Sigmoid colon (tissue), 7 donors: ENCODE measurements at regions of chr11 and their contacts with region 1.

Region 1: DNA sequence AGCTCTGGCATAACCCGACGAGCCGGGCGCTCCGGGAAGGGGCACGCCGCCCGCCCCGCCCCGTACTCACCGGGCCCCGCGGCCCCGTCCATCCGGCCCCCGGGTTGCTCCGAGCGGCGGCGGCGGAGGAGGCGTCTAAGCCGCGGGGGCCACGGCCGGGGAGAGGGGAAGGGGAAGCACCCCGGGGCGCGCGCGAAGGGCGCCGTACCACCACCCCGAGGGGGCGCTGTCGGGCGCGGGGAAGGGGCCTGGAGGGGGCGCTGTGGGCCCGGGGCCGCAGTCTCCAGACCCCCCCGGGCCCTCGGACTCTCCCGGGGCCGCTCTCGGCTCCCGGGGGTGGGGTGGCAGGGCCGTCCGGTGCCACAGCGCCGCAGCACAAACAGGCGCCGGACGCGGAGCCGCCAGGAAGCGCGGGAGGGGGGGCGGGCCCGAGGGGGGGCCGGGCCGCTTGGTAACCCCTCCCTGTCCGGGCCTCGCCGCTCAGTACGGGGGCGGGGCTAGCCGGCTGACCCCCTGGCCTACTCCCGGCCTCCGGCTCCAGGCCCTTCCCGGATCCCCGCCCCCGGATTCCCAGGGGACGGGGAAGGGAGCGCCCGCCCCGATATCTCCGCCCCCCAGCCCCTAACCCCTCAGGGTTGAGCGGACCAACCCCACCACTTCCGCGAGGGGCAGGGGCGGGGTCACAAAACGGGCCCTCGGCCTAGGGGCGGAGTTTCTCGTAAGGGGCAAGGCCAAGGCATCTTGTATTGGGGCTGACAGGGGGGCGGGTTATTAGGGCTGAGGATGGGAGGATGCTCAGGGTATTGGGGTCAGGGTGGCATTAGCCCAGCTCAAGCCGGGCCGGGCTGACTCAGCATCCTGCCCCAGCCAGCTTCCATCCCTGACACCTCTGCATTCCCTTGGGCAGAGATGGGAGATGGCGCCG is at the starts of genes EML3 and ROM1:
- DNase-seq: peak; percentile 96
- H3K4me3 ChIP-seq: peak within 1 kb of the TSS; percentile 53 to 82 (median 62)
- H3K27ac ChIP-seq: peak within 1 kb of the TSS; percentile 88 to 100 (median 96)
- H3K4me1 ChIP-seq: peaks cover 0 to 30% (median 24%) of the 10 kb centered on the region in 4 donors
- H3K27me3 ChIP-seq: no peaks in the 10 kb centered on the region
- CTCF ChIP-seq: peak; percentile 39 to 99 (median 56)
- EP300 ChIP-seq: no peak
- POLR2A ChIP-seq: no peak
- total RNA-seq, gene EML3: 19.6 to 39.5 (median 30.2) TPM
- total RNA-seq, gene ROM1: 5.3 to 13.8 (median 10.1) TPM

Region 2: GRCh38 chr11:62497132-62497915 is 115.3 kb before region 1 on chr11:
- intact Hi-C with region 1: no loop called
- DNase-seq: no peak
- H3K4me3 ChIP-seq: no peak overlapping the region
- H3K27ac ChIP-seq: no peak overlapping the region
- H3K4me1 ChIP-seq: peaks cover 0 to 33% (median 31%) of the 10 kb centered on the region in 4 donors
- H3K27me3 ChIP-seq: no peaks in the 10 kb centered on the region
- CTCF ChIP-seq: peak in 1 of 4 experiments; percentile 24
- EP300 ChIP-seq: no peak
- POLR2A ChIP-seq: no peak

Region 3: DNA sequence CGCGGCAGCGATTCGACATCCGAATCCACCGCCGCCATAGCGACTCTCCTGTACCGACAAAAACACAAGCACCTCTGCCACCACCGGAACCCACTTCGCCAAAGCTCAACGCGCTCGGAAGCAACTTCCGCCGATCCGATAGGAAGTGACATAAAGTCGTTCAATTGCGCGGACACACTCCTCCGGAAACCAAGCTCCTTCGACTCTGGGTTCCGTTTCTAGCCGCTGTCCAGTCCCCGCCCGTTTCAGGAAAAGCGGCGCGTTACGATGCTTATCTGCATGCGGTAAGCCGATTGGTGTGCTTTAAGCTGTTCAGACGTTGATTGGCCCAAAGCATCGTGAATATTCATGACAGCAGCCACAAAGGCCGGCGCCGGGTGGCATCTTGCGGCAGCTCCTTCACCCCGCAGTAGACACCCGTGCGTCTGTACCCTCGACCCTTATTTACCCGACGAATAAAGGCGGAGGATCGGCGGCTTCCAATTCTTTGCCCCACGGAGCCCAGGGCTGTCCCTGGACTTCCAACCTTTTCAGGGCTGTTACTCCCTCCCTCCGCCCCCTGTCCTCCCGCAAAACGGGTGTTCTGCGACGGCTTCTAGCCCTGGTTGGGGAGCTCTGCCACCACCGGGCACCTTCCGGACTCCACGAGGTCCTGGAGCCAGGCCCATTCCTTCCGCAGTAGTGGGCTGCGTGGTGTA is 21.0 kb before region 1 on chr11 and contains the start of gene TUT1:
- intact Hi-C with region 1: loop called (anchors 2 kb)
- DNase-seq: peak; percentile 99
- H3K4me3 ChIP-seq: peak within 1 kb of the TSS; percentile 57 to 83 (median 71)
- H3K27ac ChIP-seq: peak within 1 kb of the TSS; percentile 91 to 97 (median 97)
- H3K4me1 ChIP-seq: peaks cover 0 to 33% (median 28%) of the 10 kb centered on the region in 4 donors
- H3K27me3 ChIP-seq: no peaks in the 10 kb centered on the region
- CTCF ChIP-seq: no peak
- EP300 ChIP-seq: peak in 1 of 4 donors; percentile 61
- POLR2A ChIP-seq: peak; percentile 79 to 80
- total RNA-seq, gene TUT1: 5.4 to 7.1 (median 6.2) TPM

Region 4: GRCh38 chr11:62665075-62665598 is 52.5 kb after region 1 on chr11 and contains the starts of genes C11orf98 and CSKMT:
- intact Hi-C with region 1: loop called (anchors 5 kb)
- DNase-seq: peak; percentile 98
- H3K4me3 ChIP-seq: peak within 1 kb of the TSS; percentile 74 to 89 (median 86)
- H3K27ac ChIP-seq: peak within 1 kb of the TSS; percentile 91 to 97 (median 94)
- H3K4me1 ChIP-seq: peaks cover 0 to 40% (median 34%) of the 10 kb centered on the region in 4 donors
- H3K27me3 ChIP-seq: no peaks in the 10 kb centered on the region
- CTCF ChIP-seq: no peak
- EP300 ChIP-seq: no peak
- POLR2A ChIP-seq: peak; percentile 99
- total RNA-seq, gene C11orf98: 24.6 to 47.4 (median 26.9) TPM
- total RNA-seq, gene CSKMT: 2.9 to 6.1 (median 4.0) TPM